Ascending aorta (tissue), 2 donors: ENCODE measurements at regions of chr1 and their contacts with region 1.

Region 1: DNA sequence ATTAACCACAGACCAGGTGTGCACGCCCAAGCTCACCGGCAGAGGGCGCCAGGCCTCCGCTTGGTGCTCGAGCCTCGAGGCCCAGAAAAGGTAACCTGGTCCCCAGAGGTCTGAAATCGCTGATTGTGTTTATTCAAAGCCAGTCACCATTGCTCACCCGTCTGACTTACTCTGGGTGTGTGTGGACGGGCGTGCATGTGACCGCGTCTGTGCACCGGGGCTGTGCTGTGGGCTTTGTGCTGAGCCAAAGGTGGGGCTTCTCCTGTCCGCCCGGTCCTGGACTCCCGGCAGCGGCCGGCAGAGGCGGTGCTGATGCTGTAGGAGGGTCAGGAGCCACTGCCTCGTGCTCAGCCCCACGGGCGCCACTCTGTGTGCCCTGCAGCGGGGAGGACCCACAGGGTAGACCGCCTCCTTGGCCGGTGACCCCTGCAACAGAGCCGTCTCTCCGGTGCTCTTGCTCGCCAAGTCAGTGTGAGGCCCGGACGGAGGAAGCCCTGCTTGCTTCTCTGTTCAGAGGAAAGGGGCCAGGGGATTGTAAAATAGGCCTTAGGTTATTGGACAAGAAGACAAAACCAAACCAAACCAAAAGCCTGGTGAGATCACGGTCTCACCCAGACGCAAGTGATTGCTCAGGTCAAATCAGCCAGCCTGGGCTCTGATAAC is 32.0 kb upstream of the BTG2 start:
- DNase-seq: peak; percentile 90 to 97
- H3K4me3 ChIP-seq: peak overlapping the region; percentile 11 to 42
- H3K27ac ChIP-seq: peak overlapping the region; percentile 91 to 97
- H3K4me1 ChIP-seq: peaks cover 23 to 40% of the 10 kb centered on the region in 2 donors
- H3K27me3 ChIP-seq: no peaks in the 10 kb centered on the region
- CTCF ChIP-seq: peak; percentile 93 to 97 (median 97)

Region 2: DNA sequence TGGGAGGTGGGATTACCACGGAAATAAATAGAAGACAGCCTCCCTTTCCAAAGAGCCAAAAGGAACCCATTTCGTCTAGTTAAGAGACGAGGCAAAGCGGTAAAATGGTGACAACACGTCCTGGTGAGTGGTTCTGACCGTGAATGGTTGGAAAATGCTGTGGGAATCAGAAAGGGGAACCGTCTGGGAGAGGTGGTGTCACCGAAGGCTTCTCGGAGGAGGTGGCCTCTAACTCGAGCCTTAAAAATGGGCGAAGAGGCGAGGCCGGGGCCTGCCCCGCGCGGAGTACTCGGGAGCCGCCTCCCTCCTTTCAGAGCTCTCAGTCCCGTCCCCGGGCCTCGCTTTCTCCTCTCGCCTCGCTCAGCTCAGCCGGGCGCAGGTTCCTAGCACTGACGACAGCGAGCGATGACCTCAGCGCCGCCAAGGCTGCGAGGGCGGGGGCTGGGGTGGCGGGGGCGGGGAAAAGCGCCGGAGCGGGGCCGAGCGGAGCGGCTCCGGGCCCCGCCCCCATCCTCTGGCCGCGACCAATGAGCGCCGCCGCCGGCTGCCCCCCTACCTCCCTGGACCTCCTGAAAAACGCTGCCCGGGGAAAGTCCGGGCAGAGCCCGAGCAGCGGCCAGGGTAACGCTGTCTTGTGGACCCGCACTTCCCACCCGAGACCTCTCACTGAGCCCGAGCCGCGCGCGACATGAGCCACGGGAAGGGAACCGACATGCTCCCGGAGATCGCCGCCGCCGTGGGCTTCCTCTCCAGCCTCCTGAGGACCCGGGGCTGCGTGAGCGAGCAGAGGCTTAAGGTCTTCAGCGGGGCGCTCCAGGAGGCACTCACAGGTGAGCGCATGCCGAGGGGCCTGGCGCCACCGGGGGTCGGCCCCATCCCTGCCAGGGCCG is 31.8 kb after region 1 on chr1 and contains the start of gene BTG2:
- intact Hi-C with region 1: loop called (anchors 1 kb)
- DNase-seq: peak; percentile 71 to 97
- H3K4me3 ChIP-seq: peak within 1 kb of the TSS; percentile 90 to 95
- H3K27ac ChIP-seq: peak within 1 kb of the TSS; percentile 99
- H3K4me1 ChIP-seq: peaks cover 12 to 25% of the 10 kb centered on the region in 2 donors
- H3K27me3 ChIP-seq: no peaks in the 10 kb centered on the region
- CTCF ChIP-seq: no peak
- total RNA-seq, gene BTG2: 219 TPM

Region 3: GRCh38 chr1:203340112-203340804 is 66.9 kb after region 1 on chr1:
- intact Hi-C with region 1: loop called (anchors 1 kb)
- DNase-seq: peak in 1 of 2 donors; percentile 83
- H3K4me3 ChIP-seq: no peak overlapping the region
- H3K27ac ChIP-seq: peak overlapping the region; percentile 3 to 22
- H3K4me1 ChIP-seq: peaks cover 4 to 42% of the 10 kb centered on the region in 2 donors
- H3K27me3 ChIP-seq: no peaks in the 10 kb centered on the region
- CTCF ChIP-seq: peak; percentile 86 to 88 (median 88)

Region 4: GRCh38 chr1:203440771-203441170 is 167.4 kb after region 1 on chr1:
- intact Hi-C with region 1: loop called (anchors 2 kb)
- DNase-seq: peak in 1 of 2 donors; percentile 92
- H3K4me3 ChIP-seq: no peak overlapping the region
- H3K27ac ChIP-seq: peak overlapping the region; percentile 73 to 79
- H3K4me1 ChIP-seq: peaks cover 0 to 16% of the 10 kb centered on the region in 2 donors
- H3K27me3 ChIP-seq: no peaks in the 10 kb centered on the region
- CTCF ChIP-seq: peak; percentile 79 to 86 (median 82)

Region 5: DNA sequence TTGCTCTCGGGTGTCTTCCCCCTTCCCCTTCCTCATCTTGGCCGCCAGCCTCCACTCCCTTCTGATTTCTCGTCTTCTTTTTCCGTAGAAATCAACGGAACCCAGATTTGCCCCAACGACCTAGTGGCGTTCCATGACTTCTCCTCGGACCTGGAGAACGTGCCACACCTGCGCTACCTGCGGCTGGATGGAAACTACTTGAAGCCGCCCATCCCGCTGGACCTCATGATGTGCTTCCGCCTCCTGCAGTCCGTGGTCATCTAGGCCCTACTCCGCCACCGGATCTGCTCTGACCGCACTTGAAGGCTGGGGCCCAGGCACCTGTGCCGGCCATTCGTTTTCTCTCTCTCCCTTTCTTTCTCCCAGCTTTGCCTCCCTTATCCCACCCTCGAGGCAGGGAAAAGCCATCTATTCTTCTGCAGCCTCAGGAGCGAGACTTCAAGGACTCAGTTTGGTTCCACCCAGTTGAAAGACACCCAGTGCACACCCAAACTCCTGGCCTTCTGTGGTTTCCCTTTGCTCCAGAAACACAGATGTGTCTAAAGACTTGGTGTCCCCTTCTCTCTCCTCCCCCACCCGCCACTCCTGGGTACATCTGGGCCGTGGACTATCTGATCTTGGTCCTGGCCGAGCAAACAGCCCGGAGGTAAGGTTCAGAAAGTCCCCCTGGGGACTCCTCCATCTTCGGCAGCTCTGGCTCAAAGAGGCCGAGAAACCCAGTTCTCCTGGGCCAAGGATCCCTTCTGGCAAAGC is 213.5 kb after region 1 on chr1:
- intact Hi-C with region 1: loop called (anchors 2 kb)
- DNase-seq: no peak
- H3K4me3 ChIP-seq: peak overlapping the region; percentile 29 to 52
- H3K27ac ChIP-seq: peak overlapping the region; percentile 77 to 86
- H3K4me1 ChIP-seq: peaks cover 24 to 54% of the 10 kb centered on the region in 2 donors
- H3K27me3 ChIP-seq: no peaks in the 10 kb centered on the region
- CTCF ChIP-seq: no peak

Region 6: GRCh38 chr1:203692565-203693470 is 419.5 kb after region 1 on chr1:
- intact Hi-C with region 1: loop called (anchors 5 kb)
- DNase-seq: peak; percentile 76 to 96
- H3K4me3 ChIP-seq: no peak overlapping the region
- H3K27ac ChIP-seq: peak overlapping the region; percentile 82 to 87
- H3K4me1 ChIP-seq: peaks cover 17 to 38% of the 10 kb centered on the region in 2 donors
- H3K27me3 ChIP-seq: no peaks in the 10 kb centered on the region
- CTCF ChIP-seq: no peak